ENCODE measurements at regions of chr21 and their contacts with region 1.

Region 1: GRCh38 chr21:29372063-29372802 is 73.5 kb downstream of the BACH1 start:
- DNase-seq: peak in 2 of 4 donors; percentile 67 to 84
- ATAC-seq: peak; percentile 97
- H3K4me3 ChIP-seq: no peak overlapping the region
- H3K27ac ChIP-seq: no peak overlapping the region
- H3K4me1 ChIP-seq: no peaks in the 10 kb centered on the region
- H3K27me3 ChIP-seq: no peaks in the 10 kb centered on the region
- CTCF ChIP-seq: peak; percentile 69 to 80

Region 2: DNA sequence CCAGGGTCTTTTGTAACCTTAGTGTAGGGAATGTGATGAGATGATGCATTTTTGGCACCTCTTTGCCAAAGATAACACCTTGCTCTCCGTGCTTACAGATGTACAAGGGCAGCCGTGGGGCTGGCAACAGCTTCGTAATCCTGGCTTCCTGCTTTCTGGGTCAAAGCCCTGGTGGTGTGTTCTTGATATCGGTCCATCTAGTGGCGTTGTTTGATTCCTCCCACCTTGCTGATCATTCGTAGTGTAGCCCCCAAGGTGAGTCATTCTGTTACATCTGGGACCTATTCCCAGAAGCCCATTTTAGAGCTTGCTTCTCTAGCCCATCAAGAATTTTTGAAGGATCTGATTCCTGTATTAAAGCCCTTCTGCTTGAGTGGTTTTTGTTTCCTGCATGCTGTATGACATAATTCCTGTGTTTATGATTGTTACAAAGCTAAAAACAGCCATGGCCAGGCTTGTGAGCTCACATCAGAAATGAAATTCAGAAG is 291.7 kb before region 1 on chr21:
- intact Hi-C with region 1: loop called in 1 of 2 experiments (anchors 10 kb)
- DNase-seq: no peak
- ATAC-seq: peak; percentile 6
- H3K4me3 ChIP-seq: no peak overlapping the region
- H3K27ac ChIP-seq: peak overlapping the region; percentile 60 to 67
- H3K4me1 ChIP-seq: peaks cover 20 to 42% of the 10 kb centered on the region in 2 donors
- H3K27me3 ChIP-seq: no peaks in the 10 kb centered on the region
- CTCF ChIP-seq: no peak

Region 3: DNA sequence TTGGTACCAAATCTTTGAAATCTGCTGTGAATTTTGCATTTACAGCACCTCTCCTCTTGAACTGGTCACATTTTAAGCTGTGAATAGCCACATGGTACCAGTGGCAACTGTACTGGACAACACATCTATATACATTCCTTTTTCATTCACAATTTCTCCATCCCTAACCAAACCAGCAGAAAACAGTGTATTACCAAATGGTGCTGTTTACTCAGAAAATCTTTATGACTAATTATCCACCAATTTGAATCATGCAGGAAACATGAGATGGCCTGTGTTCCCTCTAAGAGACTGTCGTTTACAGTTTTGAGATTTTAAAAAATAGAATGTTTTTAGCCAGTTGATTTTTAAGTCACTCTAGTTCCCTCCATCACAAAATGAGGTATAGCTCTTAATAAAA is 281.2 kb before region 1 on chr21:
- intact Hi-C with region 1: loop called (anchors 5 to 10 kb)
- DNase-seq: no peak
- ATAC-seq: no peak
- H3K4me3 ChIP-seq: no peak overlapping the region
- H3K27ac ChIP-seq: no peak overlapping the region
- H3K4me1 ChIP-seq: peaks cover 0 to 23% of the 10 kb centered on the region in 2 donors
- H3K27me3 ChIP-seq: no peaks in the 10 kb centered on the region
- CTCF ChIP-seq: no peak

Region 4: GRCh38 chr21:29164325-29164942 is 207.8 kb before region 1 on chr21:
- intact Hi-C with region 1: loop called in 1 of 2 experiments (anchors 5 kb)
- DNase-seq: peak in 2 of 4 donors; percentile 46 to 75
- ATAC-seq: peak; percentile 76
- H3K4me3 ChIP-seq: no peak overlapping the region
- H3K27ac ChIP-seq: peak overlapping the region; percentile 71 to 84
- H3K4me1 ChIP-seq: peaks cover 0 to 57% of the 10 kb centered on the region in 2 donors
- H3K27me3 ChIP-seq: no peaks in the 10 kb centered on the region
- CTCF ChIP-seq: peak; percentile 61 to 71

Region 5: DNA sequence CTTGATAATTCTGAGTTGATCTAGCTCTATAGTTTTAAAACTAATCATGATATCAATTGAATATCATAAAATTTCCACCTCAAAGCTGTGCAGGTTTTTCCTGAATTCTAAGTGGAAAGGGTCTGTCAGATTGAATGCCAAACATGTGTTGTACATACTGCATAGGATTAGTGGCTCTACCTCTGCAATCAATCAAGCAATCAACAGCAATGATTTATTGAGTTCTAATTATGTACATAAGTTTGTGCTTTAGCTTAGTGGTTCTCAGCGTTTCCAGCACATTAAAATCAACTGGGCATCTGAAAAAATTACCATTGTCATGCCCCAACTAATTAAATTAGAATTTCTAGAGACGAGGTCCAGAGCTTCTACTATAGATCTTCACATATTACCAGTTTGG is 178.0 kb after region 1 on chr21:
- intact Hi-C with region 1: no loop called
- DNase-seq: no peak
- ATAC-seq: no peak
- H3K4me3 ChIP-seq: no peak overlapping the region
- H3K27ac ChIP-seq: no peak overlapping the region
- H3K4me1 ChIP-seq: no peaks in the 10 kb centered on the region
- H3K27me3 ChIP-seq: no peaks in the 10 kb centered on the region
- CTCF ChIP-seq: no peak

Measured in left lung (tissue), 14 donors.